Activated CD4-positive, alpha-beta memory T cell treated with anti-CD3 and anti-CD28 coated beads, Interleukin-2, amount 10 ng/mL, durations not matched to agents 7 days and 5 days (primary cell): ENCODE measurements at regions of chr14 and their contacts with region 1.

Region 1: DNA sequence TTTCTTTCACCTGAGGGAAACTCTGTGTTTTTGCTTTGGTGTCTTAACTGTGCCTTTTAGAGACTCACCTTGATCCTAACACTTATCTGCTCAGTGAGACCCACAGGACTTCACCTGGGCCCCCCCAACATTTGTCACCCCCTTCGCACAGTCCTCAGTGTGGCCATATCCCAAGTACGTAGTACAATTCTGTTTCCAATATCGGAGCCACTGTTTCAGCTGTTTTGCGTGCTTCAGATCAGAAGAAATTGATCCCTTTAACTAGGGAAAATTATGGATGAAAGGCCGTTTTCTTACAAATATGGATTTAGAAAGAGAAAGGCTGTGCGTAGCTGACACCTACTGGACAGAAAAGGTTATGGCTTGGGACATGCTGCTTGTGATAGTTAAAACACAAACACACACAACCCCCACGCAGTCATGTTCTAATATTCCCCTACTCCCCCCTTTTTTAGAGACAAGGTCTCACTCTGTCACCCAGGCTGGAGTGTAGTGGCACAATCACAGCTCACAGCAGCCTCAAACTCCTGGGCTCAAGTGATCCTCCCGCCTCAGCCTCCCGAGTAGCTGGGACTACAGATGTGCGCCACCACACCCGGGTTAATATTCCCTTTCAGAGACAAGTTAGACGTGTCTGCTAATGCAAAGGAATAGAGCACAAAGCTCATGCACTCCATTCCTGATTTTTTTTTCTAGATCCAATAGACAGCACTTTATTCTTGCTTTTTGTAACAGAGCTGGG is 3.6 kb upstream of the SLC7A8 start:
- DNase-seq: peak; percentile 22
- H3K4me3 Mint-ChIP-seq: no peak overlapping the region
- H3K27ac Mint-ChIP-seq: no peak overlapping the region
- H3K4me1 Mint-ChIP-seq: peaks cover 2% of the 10 kb centered on the region
- H3K27me3 Mint-ChIP-seq: peaks cover 17% of the 10 kb centered on the region

Region 2: DNA sequence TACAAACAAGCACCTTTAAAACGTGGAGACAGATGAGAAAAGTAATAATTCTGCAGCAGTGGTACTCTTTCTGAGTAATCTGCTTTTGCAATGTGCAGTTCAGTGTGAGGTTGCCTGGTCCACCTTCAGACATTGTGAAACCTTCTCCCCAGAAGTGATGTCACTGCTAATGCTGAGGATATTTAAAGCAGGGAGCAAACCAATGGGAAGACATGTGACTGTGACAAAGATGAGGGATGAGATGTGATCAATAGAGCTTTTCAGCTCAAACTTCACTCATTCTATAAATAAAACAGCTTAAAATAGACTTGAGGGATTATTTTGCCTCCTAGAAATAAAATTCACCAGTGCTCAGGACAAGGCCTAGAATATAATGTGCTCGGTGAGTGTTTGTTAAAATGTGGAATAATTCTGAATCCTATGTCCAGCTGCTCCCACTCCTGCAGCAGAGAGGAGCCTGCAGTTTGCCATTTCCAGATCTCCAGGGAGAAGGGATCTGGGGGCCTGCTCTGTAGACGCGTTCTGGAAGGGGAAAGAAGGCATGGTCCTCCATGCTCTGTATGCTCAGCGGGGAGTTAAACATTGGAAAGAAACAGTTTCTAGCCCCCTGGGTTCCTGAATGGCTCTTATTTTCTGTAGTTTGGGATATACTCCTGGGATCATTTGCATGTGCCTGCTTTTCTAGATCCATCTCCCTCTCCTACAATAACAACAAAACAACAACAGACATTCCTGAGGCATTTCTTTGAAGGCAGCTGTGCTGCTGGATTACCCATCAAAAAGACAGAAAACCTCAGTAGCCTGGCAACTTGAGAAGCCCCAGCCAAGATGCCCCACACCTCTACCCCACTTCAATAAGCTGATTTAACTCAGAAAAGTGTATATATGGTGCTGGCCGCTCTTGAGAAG is 12.6 kb before region 1 on chr14:
- CTCF ChIA-PET with region 1: interaction called, 13 read pairs
- POLR2A ChIA-PET with region 1: interaction called, 3 read pairs
- DNase-seq: no peak
- H3K4me3 Mint-ChIP-seq: no peak overlapping the region
- H3K27ac Mint-ChIP-seq: no peak overlapping the region
- H3K4me1 Mint-ChIP-seq: no peaks in the 10 kb centered on the region
- H3K27me3 Mint-ChIP-seq: peaks cover 24% of the 10 kb centered on the region

Region 3: GRCh38 chr14:23327947-23328744 is 141.1 kb after region 1 on chr14:
- CTCF ChIA-PET with region 1: no interaction called
- POLR2A ChIA-PET with region 1: no interaction called
- DNase-seq: peak; percentile 67
- H3K4me3 Mint-ChIP-seq: no peak overlapping the region
- H3K27ac Mint-ChIP-seq: no peak overlapping the region
- H3K4me1 Mint-ChIP-seq: peaks cover 8% of the 10 kb centered on the region
- H3K27me3 Mint-ChIP-seq: no peaks in the 10 kb centered on the region

Region 4: DNA sequence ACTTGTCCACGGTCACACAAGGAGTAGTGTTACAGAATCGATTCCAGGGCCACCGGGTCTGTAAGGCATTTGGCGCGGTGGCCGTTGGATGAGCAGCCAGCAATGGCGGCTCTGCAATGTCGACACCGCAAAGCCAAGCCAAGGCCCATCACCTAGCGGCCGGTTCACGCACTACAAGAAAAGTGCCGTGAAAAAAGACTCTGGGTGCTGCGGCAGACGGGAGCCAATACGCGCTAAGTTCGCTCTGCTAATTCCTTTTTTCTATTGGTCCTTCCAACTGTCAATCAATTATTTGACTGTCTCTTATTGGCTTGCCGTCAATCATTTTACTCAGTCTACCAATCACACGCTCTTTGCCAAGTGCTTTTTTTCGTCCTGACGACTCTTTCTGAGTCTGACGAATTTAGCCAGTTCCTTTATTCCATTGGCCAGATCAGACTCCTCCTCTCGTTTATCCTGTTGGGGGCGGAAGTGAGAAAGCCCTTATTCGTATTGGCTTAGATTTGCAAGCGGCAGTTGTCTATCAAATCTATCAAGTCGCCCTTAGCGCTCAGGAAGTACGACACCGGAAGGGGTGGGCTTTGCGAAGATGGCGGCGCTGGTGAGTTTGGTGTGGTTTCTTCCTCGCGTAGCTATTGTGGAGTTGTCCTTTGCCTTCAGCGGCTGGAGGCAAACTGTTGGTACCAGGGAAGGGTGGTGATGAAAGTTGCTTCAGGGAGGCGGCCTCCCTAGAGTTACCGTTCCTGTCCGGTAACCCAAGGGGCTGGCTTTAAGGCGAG is 282.2 kb after region 1 on chr14 and contains the start of gene NGDN:
- CTCF ChIA-PET with region 1: no interaction called
- POLR2A ChIA-PET with region 1: no interaction called
- DNase-seq: peak; percentile 92
- H3K4me3 Mint-ChIP-seq: no peak within 1 kb of the TSS
- H3K27ac Mint-ChIP-seq: no peak within 1 kb of the TSS
- H3K4me1 Mint-ChIP-seq: peaks cover 15% of the 10 kb centered on the region
- H3K27me3 Mint-ChIP-seq: no peaks in the 10 kb centered on the region
- total RNA-seq, gene NGDN: 34.8 to 39.0 TPM